Common myeloid progenitor, CD34-positive (primary cell): ENCODE measurements at regions of chr17 and their contacts with region 1.

Region 1: DNA sequence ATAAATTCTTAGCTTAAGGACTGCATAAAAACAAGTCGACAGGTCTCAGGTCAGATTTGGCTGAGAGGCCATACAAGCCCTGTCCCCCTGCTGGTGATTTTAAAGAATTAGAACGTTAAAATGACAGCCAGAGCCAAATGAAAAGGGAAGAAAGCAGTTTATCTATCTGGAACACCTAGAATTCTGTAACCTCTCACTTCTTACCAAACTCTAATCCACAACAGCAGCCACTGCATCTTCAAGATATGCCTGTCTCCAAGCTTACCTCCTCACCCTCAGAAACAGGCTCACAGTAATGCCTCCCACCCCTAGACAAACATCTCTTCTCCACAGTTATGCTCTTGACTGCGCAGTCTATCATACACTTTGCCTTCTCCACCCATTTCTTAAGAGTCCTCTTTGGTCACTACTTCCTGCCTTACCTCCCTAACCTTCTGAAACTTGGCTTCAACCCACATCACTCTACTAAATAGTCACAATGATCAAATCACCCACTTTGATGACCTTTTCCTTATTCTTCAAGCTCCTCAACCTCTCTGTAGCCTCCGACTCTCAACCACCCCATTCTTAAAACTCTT is 14.2 kb downstream of the ANKFY1 start:
- DNase-seq: peak; percentile 69 to 90 (median 77)
- H3K4me3 ChIP-seq: no peak overlapping the region
- H3K27ac ChIP-seq: no peak overlapping the region
- H3K4me1 ChIP-seq: peaks cover 0 to 7% (median 5%) of the 10 kb centered on the region in 4 experiments
- H3K27me3 ChIP-seq: no peaks in the 10 kb centered on the region

Region 2: GRCh38 chr17:4229627-4230541 is 19.7 kb before region 1 on chr17:
- CTCF ChIA-PET with region 1: interaction called, 12 read pairs
- POLR2A ChIA-PET with region 1: no interaction called
- DNase-seq: no peak
- H3K4me3 ChIP-seq: no peak overlapping the region
- H3K27ac ChIP-seq: no peak overlapping the region
- H3K4me1 ChIP-seq: no peaks in the 10 kb centered on the region
- H3K27me3 ChIP-seq: no peaks in the 10 kb centered on the region

Region 3: GRCh38 chr17:4262703-4263102 is 13.2 kb after region 1 on chr17:
- CTCF ChIA-PET with region 1: interaction called, 23 read pairs
- POLR2A ChIA-PET with region 1: interaction called, 4 read pairs
- DNase-seq: no peak
- H3K4me3 ChIP-seq: peak overlapping the region in 6 of 7 experiments; percentile 80 to 96 (median 92)
- H3K27ac ChIP-seq: peak overlapping the region; percentile 85 to 88
- H3K4me1 ChIP-seq: peaks cover 10 to 18% (median 15%) of the 10 kb centered on the region in 4 experiments
- H3K27me3 ChIP-seq: no peaks in the 10 kb centered on the region

Region 4: DNA sequence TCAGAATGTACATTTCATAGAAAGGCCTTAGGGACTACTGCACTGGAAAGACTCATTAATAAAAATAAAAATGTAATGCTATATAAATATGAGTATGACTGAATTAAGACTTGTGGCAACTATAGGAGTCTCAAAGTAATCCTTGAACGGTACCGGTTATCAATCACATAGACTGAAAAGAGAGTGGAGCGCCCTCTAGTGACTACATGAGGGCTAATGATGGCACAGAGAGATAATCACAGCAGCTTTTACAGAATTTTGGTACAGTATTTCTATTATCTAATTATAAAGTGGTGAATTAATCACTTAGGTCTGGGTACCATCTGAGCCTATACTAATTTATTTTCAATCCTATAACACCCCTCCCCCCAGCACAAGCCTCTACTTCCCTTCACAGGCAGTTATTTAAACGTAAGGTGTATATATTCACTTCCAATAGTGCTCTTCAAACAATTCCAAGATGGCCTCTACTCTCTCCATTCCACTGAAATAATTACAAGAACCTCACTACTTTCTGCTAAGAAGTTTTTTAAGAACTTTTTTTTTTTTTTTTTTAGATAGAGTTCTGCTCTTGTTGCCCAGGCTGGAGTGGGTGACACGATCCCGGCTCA is 55.0 kb after region 1 on chr17:
- CTCF ChIA-PET with region 1: no interaction called
- POLR2A ChIA-PET with region 1: no interaction called
- DNase-seq: peak; percentile 51 to 70 (median 69)
- H3K4me3 ChIP-seq: no peak overlapping the region
- H3K27ac ChIP-seq: no peak overlapping the region
- H3K4me1 ChIP-seq: no peaks in the 10 kb centered on the region
- H3K27me3 ChIP-seq: no peaks in the 10 kb centered on the region

Region 5: GRCh38 chr17:4334776-4335584 is 85.4 kb after region 1 on chr17:
- CTCF ChIA-PET with region 1: no interaction called
- POLR2A ChIA-PET with region 1: no interaction called
- DNase-seq: no peak
- H3K4me3 ChIP-seq: no peak overlapping the region
- H3K27ac ChIP-seq: no peak overlapping the region
- H3K4me1 ChIP-seq: peaks cover 0 to 4% (median 0%) of the 10 kb centered on the region in 4 experiments
- H3K27me3 ChIP-seq: no peaks in the 10 kb centered on the region